ENCODE measurements at regions of chr1 and their contacts with region 1.

Region 1: GRCh38 chr1:199243423-199244061 is 604.7 kb downstream of the PTPRC start:
- DNase-seq: peak; percentile 13 to 90 (median 75)

Region 2: DNA sequence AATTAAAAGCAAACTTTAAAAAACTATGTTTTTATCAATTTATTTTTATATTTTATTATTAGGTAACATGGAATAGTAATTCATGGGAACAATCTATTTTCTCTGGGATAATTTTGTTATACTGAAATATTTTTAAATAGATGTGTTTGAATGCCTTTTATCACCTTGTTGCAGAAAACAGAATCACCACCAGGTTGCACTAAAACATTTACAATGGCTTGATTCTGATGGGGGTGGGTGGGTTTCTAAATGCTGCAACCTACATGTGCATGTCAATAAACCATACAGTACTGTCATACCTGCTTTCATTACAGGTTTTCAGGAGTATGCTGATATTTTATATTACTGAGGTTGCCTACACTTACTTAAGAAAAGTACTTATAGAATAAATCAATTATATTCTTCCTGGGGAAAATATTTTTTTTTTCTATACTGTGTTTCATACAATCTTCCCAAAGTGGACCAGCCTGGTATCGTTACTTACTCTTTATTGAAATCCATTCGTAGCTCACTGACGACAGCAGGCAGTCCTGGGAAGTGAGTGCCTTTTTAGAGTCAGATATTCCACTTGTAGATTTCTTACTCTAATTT is 471.9 kb before region 1 on chr1:
- intact Hi-C with region 1: loop called (anchors 10 kb)
- DNase-seq: peak in 5 of 42 donors; percentile 16 to 52 (median 29)